Head of caudate nucleus (tissue), 42 donors: ENCODE measurements at regions of chr1 and their contacts with region 1.

Region 1: GRCh38 chr1:156129706-156130581 is 15.4 kb downstream of the LMNA start:
- DNase-seq: peak in 41 of 42 donors; percentile 68 to 93 (median 82)

Region 2: GRCh38 chr1:156090822-156091188 is 39.1 kb before region 1 on chr1:
- intact Hi-C with region 1: loop called (anchors 2 kb)
- DNase-seq: peak; percentile 78 to 95 (median 89)

Region 3: DNA sequence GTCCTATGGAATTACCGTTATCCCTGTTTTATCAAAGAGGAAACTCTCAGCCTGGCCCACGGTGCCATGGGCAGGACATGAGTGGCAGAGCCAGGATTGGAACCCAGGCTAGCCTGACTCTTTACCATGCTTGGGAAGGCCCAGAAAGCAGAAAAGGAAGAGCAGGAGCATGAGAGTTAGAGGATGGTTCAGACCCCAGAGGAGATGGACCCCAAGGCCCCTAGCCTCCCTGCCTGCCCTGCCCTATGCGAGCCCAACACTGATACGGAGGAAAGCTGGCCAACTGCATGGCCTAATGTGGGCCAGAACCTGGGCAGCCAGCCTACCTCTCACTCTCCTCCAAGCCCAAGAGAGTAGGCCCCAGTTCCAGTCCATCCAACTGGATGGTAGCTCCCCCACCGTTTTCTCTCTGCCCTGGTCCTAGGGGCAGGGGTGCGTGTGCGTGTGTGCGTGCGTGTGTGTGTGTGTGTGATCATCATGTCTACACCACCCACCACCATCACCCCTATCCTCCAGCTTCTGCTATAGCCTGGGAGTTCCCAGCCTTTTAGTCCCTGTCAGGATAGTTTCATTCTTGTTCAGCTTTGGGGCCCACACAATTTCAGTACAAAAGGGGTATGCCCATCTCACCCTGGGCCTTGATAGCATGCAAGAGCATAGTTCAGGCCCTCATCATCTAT is 32.3 kb before region 1 on chr1:
- intact Hi-C with region 1: loop called (anchors 2 kb)
- DNase-seq: no peak

Region 4: DNA sequence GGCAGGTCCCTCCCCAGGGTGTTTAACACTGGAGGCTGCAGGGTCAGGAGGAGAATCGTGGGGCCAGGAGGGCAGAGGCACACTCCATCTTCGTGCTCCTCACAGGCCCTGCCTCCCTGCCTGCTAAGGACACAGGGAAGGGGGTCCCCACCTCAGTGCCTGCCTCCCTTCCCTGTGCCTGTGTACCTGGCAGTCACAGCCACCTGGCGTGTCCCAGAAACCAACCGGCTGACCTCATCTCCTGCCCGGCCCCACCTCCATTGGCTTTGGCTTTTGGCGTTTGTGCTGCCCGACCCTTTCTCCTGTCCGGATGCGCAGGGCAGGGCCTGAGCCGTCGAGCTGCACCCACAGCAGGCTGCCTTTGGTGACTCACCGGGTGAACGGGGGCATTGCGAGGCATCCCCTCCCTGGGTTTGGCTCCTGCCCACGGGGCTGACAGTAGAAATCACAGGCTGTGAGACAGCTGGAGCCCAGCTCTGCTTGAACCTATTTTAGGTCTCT is 111.4 kb after region 1 on chr1:
- intact Hi-C with region 1: no loop called
- DNase-seq: peak in 35 of 42 donors; percentile 22 to 89 (median 60)